Aorta (tissue), 5 donors: ENCODE measurements at regions of chr15 and their contacts with region 1.

Region 1: DNA sequence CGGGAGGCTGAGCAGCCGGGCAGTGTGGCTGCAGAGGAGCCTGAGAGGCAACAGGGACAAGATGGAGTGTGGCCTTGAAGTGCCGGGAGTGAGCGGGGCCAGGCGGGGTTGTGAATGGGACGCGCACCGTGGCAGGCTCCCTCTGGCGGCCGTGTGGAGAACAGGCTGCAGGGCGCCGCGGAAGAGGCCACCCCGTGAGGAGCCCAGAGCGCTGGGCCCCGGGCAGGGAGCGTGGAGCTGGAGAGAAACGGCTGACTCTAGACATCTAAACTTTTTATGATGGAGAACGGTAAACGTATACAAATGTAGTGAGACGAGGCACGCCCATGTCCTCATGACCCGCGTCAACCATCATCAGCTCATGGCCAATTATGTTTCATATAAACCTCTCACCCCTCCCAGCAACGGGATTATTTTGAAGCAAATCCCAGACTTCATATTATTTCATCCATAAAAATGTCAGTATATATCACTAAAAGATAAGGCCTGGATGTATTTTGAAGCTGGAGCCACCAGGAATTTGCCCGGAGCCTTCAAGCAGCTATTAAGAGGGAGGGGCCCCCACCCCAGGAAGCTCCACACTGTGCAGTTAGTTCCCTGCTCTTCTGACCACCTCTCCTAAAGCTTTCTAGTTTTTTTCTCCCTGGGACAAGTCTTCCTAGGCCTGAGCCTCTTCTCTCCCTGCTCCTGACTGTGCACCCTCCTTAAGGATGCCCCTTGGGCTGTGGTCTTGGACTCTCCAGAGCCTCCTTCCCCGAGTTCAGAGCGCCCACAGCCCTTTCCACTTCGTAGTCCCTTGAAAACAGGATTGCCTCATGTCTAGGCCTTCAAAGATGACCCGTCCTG is 149.4 kb downstream of the SMAD6 start:
- DNase-seq: peak; percentile 91 to 96
- ATAC-seq: peak; percentile 94
- H3K4me3 ChIP-seq: no peak overlapping the region
- H3K27ac ChIP-seq: peak overlapping the region; percentile 37 to 71
- H3K4me1 ChIP-seq: no peaks in the 10 kb centered on the region
- H3K27me3 ChIP-seq: no peaks in the 10 kb centered on the region

Region 2: DNA sequence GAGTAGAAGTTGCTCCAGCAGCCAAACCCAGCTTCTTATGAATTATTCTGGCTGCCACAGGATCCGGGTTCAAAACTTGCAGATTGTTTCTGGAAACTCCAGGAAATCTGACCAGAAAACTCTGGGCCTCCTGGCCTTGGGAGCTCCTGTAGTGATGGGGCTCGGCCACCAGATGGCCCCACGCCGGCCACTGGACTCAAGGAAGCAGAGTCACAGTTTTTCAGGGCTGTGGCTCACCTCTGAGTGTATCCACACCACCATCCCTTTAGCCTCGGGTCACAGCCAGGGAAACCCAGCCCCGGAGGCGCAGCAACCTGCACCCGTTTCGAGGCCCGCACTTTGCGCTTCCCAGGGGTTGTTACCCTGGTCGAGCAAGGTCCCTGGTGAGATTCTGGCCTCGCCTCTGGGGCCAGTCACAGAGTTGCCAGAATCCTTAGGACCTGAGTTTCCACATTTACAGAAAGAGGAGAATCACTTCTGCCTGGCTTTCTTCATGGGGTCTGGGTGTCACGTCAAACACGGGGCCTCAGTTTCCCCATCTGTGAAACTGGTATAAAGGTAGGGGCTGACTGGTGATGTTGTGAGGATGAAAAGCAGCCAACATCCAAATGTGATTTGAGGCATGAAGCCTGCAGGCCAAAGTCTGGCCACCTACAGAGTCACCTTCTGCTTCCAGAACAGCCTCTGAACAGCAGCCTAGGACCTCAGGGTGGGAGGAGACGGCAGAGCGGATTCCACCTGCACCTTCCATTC is 232.1 kb before region 1 on chr15:
- intact Hi-C with region 1: loop called (anchors 1 to 5 kb)
- DNase-seq: peak; percentile 86 to 92
- ATAC-seq: peak; percentile 86
- H3K4me3 ChIP-seq: no peak overlapping the region
- H3K27ac ChIP-seq: no peak overlapping the region
- H3K4me1 ChIP-seq: no peaks in the 10 kb centered on the region
- H3K27me3 ChIP-seq: no peaks in the 10 kb centered on the region

Region 3: GRCh38 chr15:66692808-66693596 is 158.4 kb before region 1 on chr15:
- intact Hi-C with region 1: no loop called
- DNase-seq: no peak
- ATAC-seq: no peak
- H3K4me3 ChIP-seq: no peak overlapping the region
- H3K27ac ChIP-seq: no peak overlapping the region
- H3K4me1 ChIP-seq: no peaks in the 10 kb centered on the region
- H3K27me3 ChIP-seq: no peaks in the 10 kb centered on the region

Region 4: DNA sequence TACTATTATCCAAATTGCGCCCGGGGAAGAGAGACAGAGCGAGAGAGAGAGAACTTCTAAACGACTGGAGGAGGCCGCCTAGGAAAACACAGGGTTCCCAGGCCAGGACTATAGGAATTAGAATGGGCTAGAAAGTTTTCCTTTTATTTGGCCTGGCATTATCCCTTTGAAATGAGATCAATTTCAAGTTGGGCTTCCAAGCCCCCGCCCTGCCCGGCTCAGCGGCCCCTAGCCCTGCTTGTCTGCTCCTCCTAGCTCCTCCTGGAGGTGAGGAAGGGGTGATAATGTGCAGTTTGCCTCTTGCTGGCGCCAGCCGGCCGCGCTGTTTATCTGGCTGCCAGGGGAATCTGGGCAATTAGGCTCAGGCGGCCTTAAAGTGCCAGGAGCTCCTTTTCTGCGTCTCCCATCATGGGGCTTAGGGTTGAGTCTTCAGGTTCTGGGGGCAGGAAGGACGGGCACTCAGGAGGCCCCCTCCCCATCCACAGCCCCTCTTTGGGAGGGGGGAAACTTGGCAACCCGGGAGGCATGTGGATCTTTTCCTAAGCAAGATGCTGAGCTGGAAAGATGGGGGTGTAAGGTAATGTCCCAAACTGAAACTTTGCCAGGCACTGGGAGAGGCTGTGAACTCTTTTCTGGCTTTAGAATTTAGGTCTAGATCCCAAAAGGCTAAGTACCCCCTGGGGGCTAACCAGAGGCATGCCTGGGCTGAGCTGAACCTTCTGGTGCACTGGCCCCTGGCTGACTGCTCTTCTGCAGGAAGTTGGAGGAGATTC is 144.0 kb before region 1 on chr15:
- intact Hi-C with region 1: loop called (anchors 1 to 5 kb)
- DNase-seq: peak in 1 of 2 donors; percentile 70
- ATAC-seq: peak; percentile 27
- H3K4me3 ChIP-seq: peak overlapping the region in 1 of 2 donors; percentile 38
- H3K27ac ChIP-seq: peak overlapping the region in 1 of 2 donors; percentile 56
- H3K4me1 ChIP-seq: no peaks in the 10 kb centered on the region
- H3K27me3 ChIP-seq: no peaks in the 10 kb centered on the region

Region 5: GRCh38 chr15:66740802-66741201 is 110.6 kb before region 1 on chr15:
- intact Hi-C with region 1: no loop called
- DNase-seq: peak; percentile 76 to 90
- ATAC-seq: peak; percentile 67
- H3K4me3 ChIP-seq: no peak overlapping the region
- H3K27ac ChIP-seq: no peak overlapping the region
- H3K4me1 ChIP-seq: peaks cover 0 to 3% of the 10 kb centered on the region in 2 donors
- H3K27me3 ChIP-seq: no peaks in the 10 kb centered on the region

Region 6: GRCh38 chr15:66789029-66790025 is 62.1 kb before region 1 on chr15:
- intact Hi-C with region 1: loop called in 1 of 2 experiments (anchors 5 kb)
- DNase-seq: peak; percentile 74 to 80
- ATAC-seq: peak; percentile 76
- H3K4me3 ChIP-seq: no peak overlapping the region
- H3K27ac ChIP-seq: peak overlapping the region; percentile 23 to 44
- H3K4me1 ChIP-seq: peaks cover 0 to 3% of the 10 kb centered on the region in 2 donors
- H3K27me3 ChIP-seq: no peaks in the 10 kb centered on the region

Region 7: GRCh38 chr15:66803182-66803729 is 48.2 kb before region 1 on chr15:
- intact Hi-C with region 1: no loop called
- DNase-seq: peak; percentile 95 to 96
- ATAC-seq: peak; percentile 97
- H3K4me3 ChIP-seq: no peak overlapping the region
- H3K27ac ChIP-seq: peak overlapping the region in 1 of 2 donors; percentile 74
- H3K4me1 ChIP-seq: peaks cover 0 to 3% of the 10 kb centered on the region in 2 donors
- H3K27me3 ChIP-seq: no peaks in the 10 kb centered on the region